ENCODE measurements at regions of chr22 and their contacts with region 1.

Region 1: GRCh38 chr22:19109198-19110067 is 12.8 kb downstream of the DGCR2 start:
- DNase-seq: peak in 7 of 9 donors; percentile 62 to 88 (median 84)
- ATAC-seq: peak; percentile 92
- H3K4me3 ChIP-seq: peak overlapping the region; percentile 49
- H3K4me3 Mint-ChIP-seq: peak overlapping the region; percentile 77 to 90 (median 84)
- H3K27ac ChIP-seq: peak overlapping the region; percentile 79
- H3K27ac Mint-ChIP-seq: peak overlapping the region; percentile 84 to 100 (median 97)
- H3K4me1 ChIP-seq: peaks cover 40 to 55% of the 10 kb centered on the region in 2 donors
- H3K4me1 Mint-ChIP-seq: peaks cover 50 to 87% (median 73%) of the 10 kb centered on the region in 7 donors
- H3K27me3 ChIP-seq: no peaks in the 10 kb centered on the region
- H3K27me3 Mint-ChIP-seq: no peaks in the 10 kb centered on the region

Region 2: GRCh38 chr22:19143967-19144400 is 34.6 kb after region 1 on chr22:
- CTCF ChIA-PET with region 1: interaction called, 9 read pairs
- POLR2A ChIA-PET with region 1: interaction called, 4 read pairs
- intact Hi-C with region 1: loop called (anchors 1 kb)
- DNase-seq: peak in 6 of 9 donors; percentile 8 to 40 (median 26)
- ATAC-seq: no peak
- H3K4me3 ChIP-seq: peak overlapping the region; percentile 83
- H3K4me3 Mint-ChIP-seq: peak overlapping the region; percentile 84 to 99 (median 98)
- H3K27ac ChIP-seq: peak overlapping the region; percentile 93
- H3K27ac Mint-ChIP-seq: peak overlapping the region; percentile 91 to 99 (median 97)
- H3K4me1 ChIP-seq: no peaks in the 10 kb centered on the region
- H3K4me1 Mint-ChIP-seq: peaks cover 8 to 32% (median 18%) of the 10 kb centered on the region in 7 donors
- H3K27me3 ChIP-seq: peaks cover 0 to 1% of the 10 kb centered on the region in 2 donors
- H3K27me3 Mint-ChIP-seq: peaks cover 9 to 33% (median 11%) of the 10 kb centered on the region in 5 donors

Region 3: GRCh38 chr22:19291580-19292457 is 182.4 kb after region 1 on chr22 and contains the start of gene CLTCL1:
- CTCF ChIA-PET with region 1: no interaction called
- POLR2A ChIA-PET with region 1: interaction called, 6 read pairs
- intact Hi-C with region 1: loop called in 1 of 2 experiments (anchors 5 kb)
- DNase-seq: peak; percentile 38 to 81 (median 67)
- ATAC-seq: peak; percentile 90
- H3K4me3 ChIP-seq: peak within 1 kb of the TSS; percentile 82
- H3K4me3 Mint-ChIP-seq: peak within 1 kb of the TSS; percentile 76 to 93 (median 92)
- H3K27ac ChIP-seq: peak within 1 kb of the TSS; percentile 76
- H3K27ac Mint-ChIP-seq: peak within 1 kb of the TSS; percentile 64 to 93 (median 85)
- H3K4me1 ChIP-seq: peaks cover 6 to 8% of the 10 kb centered on the region in 2 donors
- H3K4me1 Mint-ChIP-seq: peaks cover 13 to 33% (median 25%) of the 10 kb centered on the region in 7 donors
- H3K27me3 ChIP-seq: no peaks in the 10 kb centered on the region
- H3K27me3 Mint-ChIP-seq: peaks cover 5 to 55% (median 23%) of the 10 kb centered on the region in 5 donors
- total RNA-seq, gene CLTCL1: 0.22 to 3.1 (median 1.4) TPM

Region 4: DNA sequence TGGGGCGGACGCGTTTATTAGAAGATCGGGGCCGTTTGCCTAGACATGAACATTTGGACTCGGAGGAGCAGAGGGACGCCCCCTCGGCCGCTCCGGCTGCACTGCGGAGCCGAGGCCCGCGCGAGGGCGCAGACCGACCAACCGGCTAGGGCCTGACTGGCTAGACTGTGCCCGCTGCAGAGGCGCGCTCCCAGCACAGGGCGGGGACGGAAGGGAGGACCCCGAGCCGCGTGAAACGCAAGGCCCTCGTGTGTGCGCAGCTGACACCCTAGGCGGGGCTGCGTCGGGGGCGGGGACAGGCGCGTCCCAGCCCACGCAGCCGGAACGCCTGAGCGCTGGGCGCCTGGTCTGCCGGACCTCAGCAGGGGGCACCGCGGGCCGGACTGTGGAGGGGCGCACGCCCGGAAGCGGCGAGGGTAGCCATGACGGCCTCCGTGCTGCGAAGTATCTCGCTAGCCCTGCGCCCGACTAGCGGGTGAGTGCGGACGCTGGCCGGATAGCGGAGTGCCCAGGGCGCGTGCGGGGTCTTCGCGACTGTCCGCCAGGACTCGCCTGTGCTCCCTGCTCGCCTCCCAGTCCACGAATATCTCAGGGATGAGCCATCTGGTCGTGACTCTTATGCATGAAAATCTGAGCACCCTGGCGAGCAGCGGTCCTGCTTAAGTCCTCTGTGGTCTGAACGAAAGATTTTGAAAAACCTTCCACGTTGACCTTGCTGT is 322.9 kb after region 1 on chr22 and contains the start of gene MRPL40:
- CTCF ChIA-PET with region 1: no interaction called
- POLR2A ChIA-PET with region 1: interaction called, 3 read pairs
- intact Hi-C with region 1: loop called in 1 of 2 experiments (anchors 5 kb)
- DNase-seq: peak; percentile 70 to 92 (median 84)
- ATAC-seq: peak; percentile 90
- H3K4me3 ChIP-seq: peak within 1 kb of the TSS; percentile 97
- H3K4me3 Mint-ChIP-seq: peak within 1 kb of the TSS; percentile 82 to 94 (median 91)
- H3K27ac ChIP-seq: peak within 1 kb of the TSS; percentile 80
- H3K27ac Mint-ChIP-seq: peak within 1 kb of the TSS; percentile 80 to 97 (median 91)
- H3K4me1 ChIP-seq: peaks cover 16 to 23% of the 10 kb centered on the region in 2 donors
- H3K4me1 Mint-ChIP-seq: peaks cover 27 to 50% (median 40%) of the 10 kb centered on the region in 7 donors
- H3K27me3 ChIP-seq: no peaks in the 10 kb centered on the region
- H3K27me3 Mint-ChIP-seq: no peaks in the 10 kb centered on the region
- total RNA-seq, gene MRPL40: 11.5 to 21.2 (median 17.0) TPM

Region 5: GRCh38 chr22:19717691-19718455 is 608.4 kb after region 1 on chr22:
- CTCF ChIA-PET with region 1: no interaction called
- POLR2A ChIA-PET with region 1: no interaction called
- intact Hi-C with region 1: loop called in 1 of 2 experiments (anchors 1 kb)
- DNase-seq: peak; percentile 68 to 93 (median 86)
- ATAC-seq: peak; percentile 97
- H3K4me3 ChIP-seq: peak overlapping the region; percentile 41
- H3K4me3 Mint-ChIP-seq: peak overlapping the region; percentile 72 to 88 (median 82)
- H3K27ac ChIP-seq: no peak overlapping the region
- H3K27ac Mint-ChIP-seq: peak overlapping the region in 3 of 9 donors; percentile 5 to 14 (median 9)
- H3K4me1 ChIP-seq: peaks cover 0 to 10% of the 10 kb centered on the region in 2 donors
- H3K4me1 Mint-ChIP-seq: peaks cover 0 to 10% (median 8%) of the 10 kb centered on the region in 7 donors
- H3K27me3 ChIP-seq: peaks cover 0 to 3% of the 10 kb centered on the region in 2 donors
- H3K27me3 Mint-ChIP-seq: peaks cover 28 to 59% (median 35%) of the 10 kb centered on the region in 5 donors

Region 6: DNA sequence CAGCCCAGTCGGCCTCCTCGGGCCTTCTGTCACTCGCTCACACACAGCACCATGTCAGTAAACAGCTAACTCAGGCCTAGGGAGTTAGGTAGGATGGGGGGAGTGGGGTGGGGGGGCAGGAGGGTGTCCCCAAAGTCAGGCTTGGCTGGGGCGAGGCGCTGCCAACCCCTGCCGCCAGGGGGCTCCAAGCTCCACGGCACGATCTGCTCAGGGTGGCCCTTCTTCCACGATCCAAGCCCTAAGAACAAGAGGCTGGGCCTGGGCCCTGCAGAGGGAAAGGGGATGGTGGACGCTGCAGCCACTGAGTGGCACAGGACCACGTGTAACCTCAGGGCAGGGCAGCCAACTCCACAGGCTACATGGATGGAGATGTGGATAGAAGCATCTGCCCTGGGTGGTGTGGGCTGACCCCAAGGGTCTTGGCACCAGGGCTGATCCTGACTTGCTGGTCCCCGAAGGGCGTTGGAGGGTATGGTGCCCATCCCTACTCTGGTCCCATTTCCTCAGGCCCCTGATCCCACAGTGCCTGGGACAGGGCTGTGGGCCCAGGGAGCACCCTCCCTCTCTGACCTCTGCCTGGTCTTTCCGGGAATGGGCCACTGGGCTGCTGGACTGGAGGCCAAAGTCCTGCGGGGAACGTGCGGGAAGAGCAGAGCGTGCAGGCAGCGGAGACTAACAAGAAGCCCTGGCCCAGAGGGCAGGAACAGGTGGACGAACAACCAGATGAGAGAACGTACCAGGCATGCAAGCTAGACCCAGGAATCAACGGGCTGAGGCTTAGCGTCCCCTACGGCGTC is 861.2 kb after region 1 on chr22:
- CTCF ChIA-PET with region 1: no interaction called
- POLR2A ChIA-PET with region 1: no interaction called
- intact Hi-C with region 1: no loop called
- DNase-seq: peak; percentile 59 to 83 (median 73)
- ATAC-seq: peak; percentile 81
- H3K4me3 ChIP-seq: no peak overlapping the region
- H3K4me3 Mint-ChIP-seq: peak overlapping the region in 1 of 10 donors; percentile 52
- H3K27ac ChIP-seq: no peak overlapping the region
- H3K27ac Mint-ChIP-seq: peak overlapping the region in 2 of 9 donors; percentile 41
- H3K4me1 ChIP-seq: peaks cover 7 to 11% of the 10 kb centered on the region in 2 donors
- H3K4me1 Mint-ChIP-seq: peaks cover 12 to 35% (median 13%) of the 10 kb centered on the region in 7 donors
- H3K27me3 ChIP-seq: no peaks in the 10 kb centered on the region
- H3K27me3 Mint-ChIP-seq: no peaks in the 10 kb centered on the region